Activated naive CD4-positive, alpha-beta T cell treated with anti-CD3 and anti-CD28 coated beads for 36 hours (primary cell): ENCODE measurements at regions of chr12 and their contacts with region 1.

Region 1: DNA sequence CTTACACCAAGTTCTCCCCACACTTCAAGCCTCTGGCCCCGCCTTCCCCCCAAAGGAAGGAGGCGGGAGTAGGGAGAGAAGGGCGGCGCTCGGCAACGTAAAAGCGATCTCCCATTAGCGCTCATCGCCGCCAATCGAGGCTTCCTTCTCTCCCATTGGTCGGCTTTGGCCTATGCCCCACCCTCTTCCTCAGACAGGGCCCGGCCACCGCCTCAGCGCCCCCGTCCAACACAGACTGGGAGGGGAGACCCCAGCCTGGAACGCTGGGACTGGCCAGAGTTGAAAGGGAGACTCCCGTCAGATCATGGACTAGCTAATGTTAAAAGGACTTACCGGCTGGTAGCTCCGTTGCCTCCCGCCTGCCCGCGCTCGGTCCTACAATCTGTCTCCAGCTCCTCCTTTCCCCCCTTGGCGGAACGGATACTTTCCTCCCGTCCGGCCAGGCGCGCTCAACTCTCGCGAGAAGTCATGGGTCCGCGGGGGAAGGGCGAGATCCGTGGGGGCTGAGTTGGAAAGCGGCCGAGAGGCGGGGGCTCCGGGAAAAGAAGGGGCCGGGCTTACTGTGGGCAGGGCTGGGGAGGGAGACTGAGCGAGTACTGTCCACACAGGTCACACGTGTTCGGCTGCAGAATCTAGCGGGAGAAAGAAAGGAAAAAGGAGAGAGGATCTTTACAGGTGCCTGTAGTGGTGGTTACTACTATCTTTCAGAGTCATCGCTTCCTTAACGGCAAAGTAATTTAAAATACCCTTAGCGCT is at the start of gene ATF7:
- DNase-seq: peak; percentile 99
- H3K4me3 Mint-ChIP-seq: peak within 1 kb of the TSS; percentile 97
- H3K27ac Mint-ChIP-seq: peak within 1 kb of the TSS; percentile 96
- H3K4me1 Mint-ChIP-seq: peaks cover 44% of the 10 kb centered on the region
- H3K27me3 Mint-ChIP-seq: no peaks in the 10 kb centered on the region
- total RNA-seq, gene ATF7: 19.7 to 19.8 TPM

Region 2: GRCh38 chr12:53451661-53452158 is 174.4 kb before region 1 on chr12 and contains the start of gene PCBP2:
- CTCF ChIA-PET with region 1: no interaction called
- intact Hi-C with region 1: loop called (anchors 1 kb)
- DNase-seq: peak; percentile 99
- H3K4me3 Mint-ChIP-seq: peak within 1 kb of the TSS; percentile 99
- H3K27ac Mint-ChIP-seq: peak within 1 kb of the TSS; percentile 99
- H3K4me1 Mint-ChIP-seq: peaks cover 36% of the 10 kb centered on the region
- H3K27me3 Mint-ChIP-seq: no peaks in the 10 kb centered on the region
- total RNA-seq, gene PCBP2: 1,085 to 1,132 TPM

Region 3: GRCh38 chr12:53543539-53543938 is 82.6 kb before region 1 on chr12:
- CTCF ChIA-PET with region 1: interaction called, 12 read pairs
- intact Hi-C with region 1: no loop called
- DNase-seq: peak; percentile 77
- H3K4me3 Mint-ChIP-seq: no peak overlapping the region
- H3K27ac Mint-ChIP-seq: peak overlapping the region; percentile 26
- H3K4me1 Mint-ChIP-seq: peaks cover 13% of the 10 kb centered on the region
- H3K27me3 Mint-ChIP-seq: no peaks in the 10 kb centered on the region

Region 4: GRCh38 chr12:53561590-53561953 is 64.6 kb before region 1 on chr12:
- CTCF ChIA-PET with region 1: no interaction called
- intact Hi-C with region 1: loop called (anchors 1 kb)
- DNase-seq: no peak
- H3K4me3 Mint-ChIP-seq: no peak overlapping the region
- H3K27ac Mint-ChIP-seq: peak overlapping the region; percentile 81
- H3K4me1 Mint-ChIP-seq: peaks cover 67% of the 10 kb centered on the region
- H3K27me3 Mint-ChIP-seq: no peaks in the 10 kb centered on the region

Region 5: DNA sequence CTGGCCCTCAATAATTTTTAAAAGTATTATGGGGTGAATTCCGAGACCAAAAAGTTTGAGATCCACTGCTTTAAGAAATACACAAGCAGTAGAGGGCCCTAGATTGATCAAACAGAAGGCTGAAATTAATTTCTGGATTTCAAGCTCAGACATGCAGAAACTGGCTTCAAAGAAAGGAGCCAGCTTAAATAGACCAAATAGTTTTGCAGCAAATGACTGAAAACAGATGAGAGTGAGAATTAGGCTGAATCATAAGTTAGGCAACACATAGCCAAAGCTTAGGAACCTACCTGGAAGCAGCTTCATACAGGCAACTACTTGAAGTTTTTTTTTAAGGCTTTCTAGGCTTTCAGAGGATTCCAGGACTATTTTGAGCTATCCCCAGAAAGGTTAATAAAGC is 12.3 kb before region 1 on chr12:
- CTCF ChIA-PET with region 1: interaction called, 11 read pairs
- intact Hi-C with region 1: loop called (anchors 1 kb)
- DNase-seq: no peak
- H3K4me3 Mint-ChIP-seq: no peak overlapping the region
- H3K27ac Mint-ChIP-seq: no peak overlapping the region
- H3K4me1 Mint-ChIP-seq: peaks cover 34% of the 10 kb centered on the region
- H3K27me3 Mint-ChIP-seq: no peaks in the 10 kb centered on the region

Region 6: GRCh38 chr12:53727310-53728041 is 101.4 kb after region 1 on chr12 and contains the start of gene CALCOCO1:
- CTCF ChIA-PET with region 1: no interaction called
- intact Hi-C with region 1: loop called (anchors 1 kb)
- DNase-seq: peak; percentile 99
- H3K4me3 Mint-ChIP-seq: peak within 1 kb of the TSS; percentile 92
- H3K27ac Mint-ChIP-seq: peak within 1 kb of the TSS; percentile 87
- H3K4me1 Mint-ChIP-seq: peaks cover 16% of the 10 kb centered on the region
- H3K27me3 Mint-ChIP-seq: no peaks in the 10 kb centered on the region
- total RNA-seq, gene CALCOCO1: 8.1 to 8.3 TPM